Activated CD4-positive, alpha-beta memory T cell treated with anti-CD3 and anti-CD28 coated beads for 36 hours (primary cell): ENCODE measurements at regions of chr1 and their contacts with region 1.

Region 1: DNA sequence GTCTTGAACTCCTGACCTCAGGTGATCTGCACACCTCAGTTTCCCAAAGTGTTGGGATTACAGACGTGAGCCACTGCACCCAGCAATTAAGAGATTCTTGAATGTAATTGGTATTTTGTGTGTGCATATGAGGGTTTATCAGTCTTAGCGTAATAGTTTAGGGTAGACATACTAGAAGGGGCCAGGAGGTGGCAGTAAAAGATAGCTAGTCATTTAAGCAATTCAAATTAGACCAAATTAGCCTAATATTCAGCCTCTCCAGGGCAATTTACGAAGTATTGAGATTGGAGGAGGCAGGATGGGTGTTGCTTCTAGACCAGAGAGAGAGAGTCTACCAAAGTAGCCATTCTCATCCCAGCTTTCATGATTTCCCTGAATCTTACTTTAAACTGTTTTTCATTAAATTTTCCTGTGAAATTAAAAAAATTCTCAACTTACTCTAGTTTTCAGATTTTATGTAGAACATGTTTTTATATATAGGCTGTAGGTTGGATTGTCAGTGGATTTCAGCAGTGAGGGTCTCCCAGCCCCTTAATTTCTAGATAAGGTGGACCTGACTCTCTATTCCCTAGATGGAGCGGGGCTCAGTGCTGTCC is 119.7 kb downstream of the HHAT start:
- DNase-seq: no peak
- H3K4me3 Mint-ChIP-seq: no peak overlapping the region
- H3K27ac Mint-ChIP-seq: no peak overlapping the region
- H3K4me1 Mint-ChIP-seq: peaks cover 27% of the 10 kb centered on the region
- H3K27me3 Mint-ChIP-seq: peaks cover 2% of the 10 kb centered on the region

Region 2: DNA sequence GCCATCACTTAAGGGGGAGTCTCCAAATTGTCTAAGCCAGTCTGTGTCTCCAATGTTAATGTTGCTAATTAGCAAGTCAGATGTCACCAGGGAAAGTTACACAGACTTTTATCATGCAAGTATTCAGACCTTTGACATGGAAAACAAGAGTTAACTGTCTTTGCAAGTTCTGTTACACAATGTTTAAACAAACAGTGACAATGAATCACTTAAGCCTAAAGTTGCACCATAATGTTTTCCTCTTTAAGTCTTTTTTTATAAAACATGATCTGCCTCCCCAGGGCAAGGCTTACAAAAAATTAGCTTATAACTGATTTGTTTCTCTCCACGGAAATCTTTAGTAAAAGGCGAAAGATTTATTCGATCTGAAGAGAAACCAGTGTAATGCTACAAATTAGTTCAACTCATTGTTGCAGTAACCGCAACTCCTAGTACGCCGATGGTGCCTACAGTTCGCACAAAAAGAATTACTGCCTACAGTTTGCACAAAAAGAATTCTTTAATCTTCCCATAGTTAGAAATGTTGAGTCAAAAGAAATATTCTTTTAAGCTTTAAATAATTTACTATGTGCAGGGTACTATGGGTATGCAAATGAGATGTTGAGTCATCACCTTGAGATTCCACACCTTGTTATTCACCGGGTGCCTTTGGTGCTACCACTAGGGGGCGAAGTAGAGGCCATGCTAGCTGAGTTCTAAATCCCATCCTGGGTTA is 74.4 kb before region 1 on chr1:
- CTCF ChIA-PET with region 1: interaction called, 8 read pairs
- POLR2A ChIA-PET with region 1: interaction called, 15 read pairs
- intact Hi-C with region 1: loop called (anchors 1 kb)
- DNase-seq: peak; percentile 88
- H3K4me3 Mint-ChIP-seq: no peak overlapping the region
- H3K27ac Mint-ChIP-seq: peak overlapping the region; percentile 89
- H3K4me1 Mint-ChIP-seq: peaks cover 34% of the 10 kb centered on the region
- H3K27me3 Mint-ChIP-seq: no peaks in the 10 kb centered on the region

Region 3: DNA sequence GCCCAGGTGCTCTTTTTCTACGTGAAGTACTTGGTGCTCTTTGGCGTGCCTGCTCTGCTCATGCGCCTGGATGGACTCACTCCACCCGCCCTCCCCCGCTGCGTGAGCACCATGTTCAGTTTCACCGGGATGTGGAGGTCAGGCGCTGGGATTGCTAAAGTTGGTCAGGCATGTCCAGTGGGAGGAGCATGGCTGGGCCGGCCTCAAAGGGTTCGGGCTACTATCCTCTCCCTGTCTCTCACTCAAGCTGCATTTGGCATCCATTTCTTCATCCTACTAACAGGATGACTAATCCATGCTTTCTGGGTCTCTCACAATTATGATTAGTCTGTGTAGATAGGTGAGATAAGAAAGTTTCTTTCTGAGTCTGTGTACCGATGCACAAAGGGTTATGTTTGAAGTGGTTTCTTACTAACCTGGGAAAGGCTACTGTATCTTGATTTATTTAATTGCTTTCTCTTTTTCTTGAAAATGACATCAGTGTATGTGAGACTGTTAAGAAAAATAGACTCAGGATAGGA is 16.2 kb after region 1 on chr1:
- CTCF ChIA-PET with region 1: interaction called, 12 read pairs
- POLR2A ChIA-PET with region 1: interaction called, 10 read pairs
- intact Hi-C with region 1: loop called (anchors 1 kb)
- DNase-seq: peak; percentile 44
- H3K4me3 Mint-ChIP-seq: no peak overlapping the region
- H3K27ac Mint-ChIP-seq: no peak overlapping the region
- H3K4me1 Mint-ChIP-seq: peaks cover 24% of the 10 kb centered on the region
- H3K27me3 Mint-ChIP-seq: peaks cover 2% of the 10 kb centered on the region

Region 4: GRCh38 chr1:210951279-210951678 is 502.9 kb after region 1 on chr1:
- CTCF ChIA-PET with region 1: interaction called, 11 read pairs
- POLR2A ChIA-PET with region 1: no interaction called
- intact Hi-C with region 1: loop called (anchors 1 kb)
- DNase-seq: no peak
- H3K4me3 Mint-ChIP-seq: no peak overlapping the region
- H3K27ac Mint-ChIP-seq: no peak overlapping the region
- H3K4me1 Mint-ChIP-seq: no peaks in the 10 kb centered on the region
- H3K27me3 Mint-ChIP-seq: peaks cover 2% of the 10 kb centered on the region

Region 5: DNA sequence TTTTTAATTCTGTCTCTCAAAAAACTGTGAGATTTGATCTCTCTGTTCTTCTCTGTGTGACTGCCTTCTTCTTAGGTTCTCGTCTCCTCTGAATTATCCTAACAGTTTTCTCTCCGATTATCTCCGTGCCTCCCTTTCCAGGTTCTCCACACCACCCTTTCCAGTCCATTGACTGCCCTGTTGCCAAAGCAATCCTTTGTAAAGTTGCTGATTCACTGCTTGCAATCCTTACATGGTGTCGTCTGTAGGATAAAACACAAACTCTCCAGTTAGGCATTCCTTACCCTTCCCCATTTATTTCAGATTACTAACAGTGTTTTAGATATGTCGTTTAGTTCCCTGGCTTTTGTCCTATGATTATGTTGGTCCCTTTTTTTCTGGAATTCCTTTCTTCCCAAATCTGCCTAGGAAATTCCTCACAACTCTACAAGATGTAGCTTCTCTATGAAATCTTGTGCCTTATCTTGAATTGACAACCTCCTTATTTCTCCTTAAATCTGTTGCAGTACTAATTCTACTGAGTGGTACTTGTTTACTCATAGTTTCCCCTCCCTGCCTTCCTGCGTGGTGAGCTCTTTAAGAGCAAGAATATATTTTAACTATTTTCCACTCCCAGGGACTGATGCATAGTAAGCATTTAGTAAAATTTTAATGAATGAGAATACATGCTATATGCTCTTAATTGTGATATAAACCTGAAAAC is 833.1 kb after region 1 on chr1:
- CTCF ChIA-PET with region 1: no interaction called
- POLR2A ChIA-PET with region 1: no interaction called
- intact Hi-C with region 1: loop called (anchors 5 kb)
- DNase-seq: peak; percentile 19
- H3K4me3 Mint-ChIP-seq: no peak overlapping the region
- H3K27ac Mint-ChIP-seq: no peak overlapping the region
- H3K4me1 Mint-ChIP-seq: peaks cover 4% of the 10 kb centered on the region
- H3K27me3 Mint-ChIP-seq: no peaks in the 10 kb centered on the region

Region 6: GRCh38 chr1:211578640-211579433 is 1130.4 kb after region 1 on chr1 and contains the start of gene SLC30A1:
- CTCF ChIA-PET with region 1: no interaction called
- POLR2A ChIA-PET with region 1: no interaction called
- intact Hi-C with region 1: loop called (anchors 10 kb)
- DNase-seq: peak; percentile 99
- H3K4me3 Mint-ChIP-seq: peak within 1 kb of the TSS; percentile 91
- H3K27ac Mint-ChIP-seq: peak within 1 kb of the TSS; percentile 69
- H3K4me1 Mint-ChIP-seq: peaks cover 32% of the 10 kb centered on the region
- H3K27me3 Mint-ChIP-seq: no peaks in the 10 kb centered on the region
- total RNA-seq, gene SLC30A1: 3.5 to 3.9 TPM